ENCODE measurements at regions of chr17 and their contacts with region 1.

Region 1: DNA sequence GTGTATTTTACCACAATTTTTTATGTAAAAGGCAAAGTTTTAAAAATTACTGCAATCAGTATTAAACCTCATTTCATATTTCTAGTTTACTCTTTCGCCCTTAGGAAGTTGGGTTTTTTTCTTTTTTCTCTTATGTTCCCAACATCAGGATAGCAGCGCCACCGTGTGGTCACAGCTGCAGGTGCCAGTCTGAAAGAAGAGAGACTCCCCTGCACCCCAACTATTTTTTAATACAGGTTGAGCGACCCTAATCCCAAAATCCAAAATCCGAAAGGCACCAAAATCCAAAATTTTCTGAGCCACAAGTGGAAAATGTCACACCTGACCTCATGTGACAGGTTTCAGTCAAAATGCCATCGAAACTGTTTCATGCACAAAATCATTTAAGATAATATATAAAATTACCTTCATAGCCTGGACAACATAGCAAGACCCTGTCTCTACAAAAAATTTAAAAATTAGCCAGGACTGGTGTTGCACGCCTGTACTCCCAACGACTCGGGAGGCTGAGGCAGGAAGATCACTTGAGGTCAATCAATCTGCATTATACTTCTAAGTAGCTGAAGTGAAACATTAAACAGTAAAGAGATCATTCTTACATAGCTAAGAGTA is 21.8 kb upstream of the ASGR2 start:
- DNase-seq: peak; percentile 31 to 95 (median 78)

Region 2: DNA sequence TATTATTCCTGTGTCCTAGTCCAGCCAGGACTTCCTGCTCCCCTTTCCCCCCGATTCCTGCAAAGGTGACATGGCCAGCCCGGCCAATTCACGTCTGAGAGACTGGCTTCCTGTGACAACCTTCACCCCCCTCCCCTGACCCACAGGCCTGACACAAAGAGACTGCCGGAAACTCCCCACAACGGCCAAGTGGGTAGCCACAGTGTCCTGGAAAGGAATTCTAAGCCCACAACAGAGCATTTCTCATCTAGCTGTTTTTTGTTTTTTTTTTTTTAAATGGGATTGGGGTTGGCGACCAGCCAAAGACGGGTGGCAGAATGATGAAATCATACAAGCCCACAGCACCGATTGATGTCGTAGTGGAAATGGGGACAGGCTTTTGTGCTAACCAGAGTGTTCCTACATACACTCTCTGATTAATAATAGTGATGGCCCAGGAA is 383.3 kb before region 1 on chr17:
- intact Hi-C with region 1: no loop called
- DNase-seq: peak in 3 of 10 donors; percentile 19 to 81 (median 43)

Region 3: DNA sequence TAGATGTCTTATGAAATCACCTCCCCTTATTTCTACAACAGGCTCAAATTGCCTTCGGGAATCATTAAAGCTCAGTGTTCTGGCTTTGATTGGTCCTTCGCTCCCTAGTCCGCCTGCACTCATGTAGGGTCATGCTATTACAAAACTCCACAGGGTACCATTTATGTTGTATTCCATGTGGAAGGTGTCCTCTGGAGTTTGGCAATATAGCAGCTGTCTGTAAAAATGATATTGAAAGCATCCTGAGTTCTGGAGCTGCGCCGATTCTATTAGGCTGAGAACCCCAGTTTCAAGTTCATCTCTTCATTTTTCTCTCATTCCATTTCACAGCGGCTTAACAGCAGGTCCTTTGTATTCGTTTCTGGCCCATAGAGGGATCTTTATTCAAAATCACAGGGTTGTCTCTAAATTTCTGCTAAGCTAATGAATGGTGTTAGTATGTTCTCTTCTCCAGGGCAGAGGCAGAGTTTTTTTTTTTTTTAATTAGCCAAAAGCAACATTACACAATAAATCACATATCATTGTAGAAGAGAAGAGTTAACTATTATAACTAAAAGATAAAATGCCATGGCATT is 233.0 kb before region 1 on chr17:
- intact Hi-C with region 1: no loop called
- DNase-seq: no peak

Region 4: DNA sequence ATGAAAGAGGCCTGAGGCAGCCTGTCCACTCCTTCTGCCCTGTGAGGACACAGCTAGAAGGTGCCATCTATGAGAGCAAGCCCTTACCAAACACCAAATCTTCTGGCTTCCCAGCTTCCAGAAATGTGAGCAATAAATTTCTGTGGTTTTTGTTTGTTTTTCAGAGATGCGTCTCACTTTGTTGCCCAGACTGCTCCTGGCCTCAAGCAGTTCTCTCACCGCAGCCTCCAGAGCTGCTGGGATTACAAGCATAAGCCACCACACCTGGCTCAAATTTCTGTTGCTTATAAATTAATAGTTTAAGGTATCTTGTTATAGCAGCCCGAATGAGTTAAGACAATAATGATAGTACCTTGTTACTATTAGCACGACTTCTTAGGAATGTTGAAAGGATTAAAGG is 80.0 kb before region 1 on chr17:
- intact Hi-C with region 1: loop called (anchors 1 kb)
- DNase-seq: no peak